Caco-2 (cell line): ENCODE measurements at regions of chr10 and their contacts with region 1.

Region 1: DNA sequence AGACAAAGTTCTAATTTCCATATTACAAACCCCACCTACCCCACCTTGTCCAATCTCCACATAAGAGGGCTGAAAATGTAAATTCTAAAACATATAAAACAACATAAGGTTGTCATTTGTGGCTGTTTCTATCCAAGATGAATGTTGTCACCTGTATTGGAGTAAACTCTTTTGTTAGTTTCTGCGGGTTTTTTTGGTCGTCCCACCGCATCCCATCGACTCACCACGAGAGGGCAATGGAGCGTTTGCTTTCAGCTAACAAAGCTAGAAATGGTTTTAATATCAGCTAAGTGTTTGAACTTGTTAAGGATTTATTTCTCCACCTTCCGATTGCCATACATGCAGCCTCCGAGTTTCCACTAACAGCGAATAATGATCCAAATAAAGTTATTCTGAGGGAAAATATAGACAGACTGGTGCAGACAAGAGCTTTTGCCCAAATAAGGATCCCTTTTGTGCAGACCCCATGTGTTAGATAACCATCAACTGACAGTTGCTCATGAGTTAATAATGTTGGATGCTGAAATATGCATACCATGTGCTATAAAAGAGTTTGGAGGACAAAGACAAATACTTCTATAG is 137.2 kb downstream of the ARID5B start:
- DNase-seq: peak; percentile 84 to 85
- H3K4me3 ChIP-seq: no peak overlapping the region
- H3K4me3 Mint-ChIP-seq: peak overlapping the region; percentile 50
- H3K27ac Mint-ChIP-seq: peak overlapping the region; percentile 56
- H3K4me1 ChIP-seq: peaks cover 95% of the 10 kb centered on the region
- H3K4me1 Mint-ChIP-seq: peaks cover 93% of the 10 kb centered on the region
- H3K27me3 ChIP-seq: no peaks in the 10 kb centered on the region
- H3K27me3 Mint-ChIP-seq: no peaks in the 10 kb centered on the region
- CTCF ChIP-seq: peak; percentile 93 to 98

Region 2: GRCh38 chr10:61903221-61903927 is 135.3 kb before region 1 on chr10:
- CTCF ChIA-PET with region 1: interaction called, 5 read pairs
- POLR2A ChIA-PET with region 1: no interaction called
- intact Hi-C with region 1: loop called (anchors 2 kb)
- DNase-seq: peak in 1 of 2 experiments; percentile 84
- H3K4me3 ChIP-seq: peak overlapping the region; percentile 97
- H3K4me3 Mint-ChIP-seq: peak overlapping the region; percentile 89
- H3K27ac Mint-ChIP-seq: peak overlapping the region; percentile 99
- H3K4me1 ChIP-seq: peaks cover 57% of the 10 kb centered on the region
- H3K4me1 Mint-ChIP-seq: peaks cover 34% of the 10 kb centered on the region
- H3K27me3 ChIP-seq: no peaks in the 10 kb centered on the region
- H3K27me3 Mint-ChIP-seq: no peaks in the 10 kb centered on the region
- CTCF ChIP-seq: peak; percentile 14 to 16

Region 3: DNA sequence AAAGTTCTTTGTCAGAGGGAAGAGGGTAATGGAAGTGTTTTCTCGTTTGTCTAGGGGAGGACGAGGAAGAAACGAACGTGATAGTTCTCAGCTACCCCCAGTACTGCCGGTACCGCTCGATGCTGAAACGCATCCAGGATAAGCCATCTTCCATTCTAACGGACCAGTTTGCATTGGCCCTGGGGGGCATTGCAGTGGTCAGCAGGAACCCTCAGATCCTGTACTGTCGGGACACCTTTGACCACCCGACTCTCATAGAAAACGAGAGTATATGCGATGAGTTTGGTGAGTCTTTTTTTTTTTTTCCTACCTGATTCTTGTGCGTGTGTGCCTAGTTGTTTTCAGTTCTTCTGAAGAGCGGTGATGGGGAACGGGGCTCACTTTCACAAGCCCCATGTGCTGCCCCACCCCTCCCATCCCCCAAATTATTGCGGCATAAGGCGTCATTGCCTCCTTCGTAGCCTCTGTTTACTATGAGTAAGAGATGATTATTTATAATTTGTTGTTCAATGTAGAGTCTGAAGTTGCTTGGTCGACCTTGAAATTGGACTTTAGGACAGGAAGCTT is 38.6 kb before region 1 on chr10:
- CTCF ChIA-PET with region 1: no interaction called
- POLR2A ChIA-PET with region 1: no interaction called
- intact Hi-C with region 1: no loop called
- DNase-seq: no peak
- H3K4me3 ChIP-seq: no peak overlapping the region
- H3K4me3 Mint-ChIP-seq: no peak overlapping the region
- H3K27ac Mint-ChIP-seq: no peak overlapping the region
- H3K4me1 ChIP-seq: peaks cover 17% of the 10 kb centered on the region
- H3K4me1 Mint-ChIP-seq: peaks cover 39% of the 10 kb centered on the region
- H3K27me3 ChIP-seq: no peaks in the 10 kb centered on the region
- H3K27me3 Mint-ChIP-seq: no peaks in the 10 kb centered on the region
- CTCF ChIP-seq: no peak

Region 4: DNA sequence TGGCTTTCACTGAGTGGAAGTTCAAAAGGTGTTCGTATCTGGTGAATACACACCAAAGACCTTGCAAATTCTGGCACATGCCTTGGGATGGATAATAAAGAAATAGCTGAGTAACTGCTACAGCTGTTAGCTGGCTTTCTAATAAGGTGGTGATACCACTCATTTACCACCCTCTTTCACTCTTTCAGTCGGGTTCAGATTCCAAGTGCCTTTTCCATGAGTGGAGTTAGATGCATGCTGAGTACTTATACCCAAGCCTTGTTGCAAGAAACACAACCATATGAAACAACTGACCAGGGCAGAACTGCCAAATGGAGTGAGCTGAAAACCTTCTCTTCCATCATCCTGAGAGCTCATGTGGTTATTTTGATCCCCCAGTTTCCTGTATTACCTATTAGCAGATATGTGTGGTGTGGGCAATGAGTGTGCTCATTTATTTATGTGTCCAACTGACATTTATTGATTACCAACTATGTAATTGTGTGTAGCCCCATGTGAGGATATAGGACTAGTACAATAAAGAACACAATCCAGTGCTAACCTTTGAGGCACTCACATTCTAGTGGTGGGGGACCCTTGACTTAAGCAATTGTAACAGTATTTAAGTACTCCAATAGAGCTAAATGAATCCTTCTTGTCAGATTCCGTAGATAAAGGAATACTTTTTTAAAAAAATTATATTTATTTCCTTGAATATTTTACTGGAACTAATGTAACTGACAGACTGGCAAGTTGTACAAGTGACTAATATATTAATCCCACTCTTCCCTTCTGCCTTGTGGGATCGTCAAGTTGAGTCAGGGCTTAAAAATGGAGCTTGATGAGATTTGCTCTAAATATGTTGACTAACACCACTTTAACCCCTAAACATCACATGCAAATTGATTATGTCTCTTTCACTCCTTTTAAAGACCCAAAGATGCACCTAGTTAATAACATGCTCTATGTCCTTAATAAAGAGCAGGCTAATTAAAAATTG is 12.5 kb before region 1 on chr10:
- CTCF ChIA-PET with region 1: interaction called, 33 read pairs
- POLR2A ChIA-PET with region 1: interaction called, 4 read pairs
- intact Hi-C with region 1: loop called (anchors 1 kb)
- DNase-seq: no peak
- H3K4me3 ChIP-seq: no peak overlapping the region
- H3K4me3 Mint-ChIP-seq: no peak overlapping the region
- H3K27ac Mint-ChIP-seq: peak overlapping the region; percentile 82
- H3K4me1 ChIP-seq: peaks cover 91% of the 10 kb centered on the region
- H3K4me1 Mint-ChIP-seq: peaks cover 90% of the 10 kb centered on the region
- H3K27me3 ChIP-seq: no peaks in the 10 kb centered on the region
- H3K27me3 Mint-ChIP-seq: no peaks in the 10 kb centered on the region
- CTCF ChIP-seq: no peak

Region 5: GRCh38 chr10:62050893-62051433 is 12.3 kb after region 1 on chr10:
- CTCF ChIA-PET with region 1: interaction called, 35 read pairs
- POLR2A ChIA-PET with region 1: interaction called, 21 read pairs
- intact Hi-C with region 1: loop called (anchors 1 kb)
- DNase-seq: peak in 1 of 2 experiments; percentile 57
- H3K4me3 ChIP-seq: peak overlapping the region; percentile 36
- H3K4me3 Mint-ChIP-seq: peak overlapping the region; percentile 93
- H3K27ac Mint-ChIP-seq: peak overlapping the region; percentile 79
- H3K4me1 ChIP-seq: peaks cover 74% of the 10 kb centered on the region
- H3K4me1 Mint-ChIP-seq: peaks cover 82% of the 10 kb centered on the region
- H3K27me3 ChIP-seq: no peaks in the 10 kb centered on the region
- H3K27me3 Mint-ChIP-seq: no peaks in the 10 kb centered on the region
- CTCF ChIP-seq: no peak

Region 6: GRCh38 chr10:62121187-62121530 is 82.5 kb after region 1 on chr10:
- CTCF ChIA-PET with region 1: no interaction called
- POLR2A ChIA-PET with region 1: no interaction called
- intact Hi-C with region 1: no loop called
- DNase-seq: no peak
- H3K4me3 ChIP-seq: no peak overlapping the region
- H3K4me3 Mint-ChIP-seq: no peak overlapping the region
- H3K27ac Mint-ChIP-seq: no peak overlapping the region
- H3K4me1 ChIP-seq: no peaks in the 10 kb centered on the region
- H3K4me1 Mint-ChIP-seq: peaks cover under 1% of the 10 kb centered on the region
- H3K27me3 ChIP-seq: no peaks in the 10 kb centered on the region
- H3K27me3 Mint-ChIP-seq: no peaks in the 10 kb centered on the region
- CTCF ChIP-seq: no peak

Region 7: DNA sequence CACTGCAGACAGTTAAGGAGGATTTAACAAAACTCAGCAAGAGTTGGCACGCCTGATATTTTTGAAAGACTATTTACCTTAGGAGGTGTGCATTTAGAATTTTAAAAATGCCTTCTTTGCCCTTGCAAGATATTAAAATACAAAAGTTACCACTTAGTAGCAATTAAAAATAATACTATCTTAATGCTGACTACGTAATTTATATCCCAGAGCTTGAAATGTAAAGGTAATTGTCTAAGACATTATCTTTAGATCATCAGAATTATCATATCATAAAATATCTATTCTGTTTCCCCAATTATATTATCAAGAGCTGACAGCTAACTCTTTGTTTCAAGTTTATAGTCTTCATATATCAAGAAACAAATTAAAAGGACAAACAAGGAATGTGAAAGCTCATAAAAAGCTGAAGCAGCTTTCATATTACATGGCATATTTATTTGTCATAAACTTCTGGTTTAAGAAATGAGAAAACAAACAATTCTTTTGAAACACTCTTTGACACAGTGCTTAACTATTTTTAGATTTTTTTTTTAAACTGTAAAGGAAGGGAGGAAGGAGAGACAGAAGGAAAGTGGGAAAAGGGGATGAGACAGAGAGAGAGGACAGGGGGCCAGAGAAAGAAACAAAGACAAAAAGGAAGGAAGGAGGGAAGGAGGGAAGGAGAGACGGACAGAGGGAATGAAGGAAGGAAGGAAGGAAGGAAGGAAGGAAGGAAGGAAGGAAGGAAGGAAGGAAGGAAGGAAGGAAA is 156.4 kb after region 1 on chr10:
- CTCF ChIA-PET with region 1: no interaction called
- POLR2A ChIA-PET with region 1: interaction called, 3 read pairs
- intact Hi-C with region 1: loop called (anchors 5 kb)
- DNase-seq: no peak
- H3K4me3 ChIP-seq: no peak overlapping the region
- H3K4me3 Mint-ChIP-seq: no peak overlapping the region
- H3K27ac Mint-ChIP-seq: no peak overlapping the region
- H3K4me1 ChIP-seq: no peaks in the 10 kb centered on the region
- H3K4me1 Mint-ChIP-seq: peaks cover 14% of the 10 kb centered on the region
- H3K27me3 ChIP-seq: no peaks in the 10 kb centered on the region
- H3K27me3 Mint-ChIP-seq: no peaks in the 10 kb centered on the region
- CTCF ChIP-seq: no peak